ENCODE measurements at regions of chr18 and their contacts with region 1.

Region 1: DNA sequence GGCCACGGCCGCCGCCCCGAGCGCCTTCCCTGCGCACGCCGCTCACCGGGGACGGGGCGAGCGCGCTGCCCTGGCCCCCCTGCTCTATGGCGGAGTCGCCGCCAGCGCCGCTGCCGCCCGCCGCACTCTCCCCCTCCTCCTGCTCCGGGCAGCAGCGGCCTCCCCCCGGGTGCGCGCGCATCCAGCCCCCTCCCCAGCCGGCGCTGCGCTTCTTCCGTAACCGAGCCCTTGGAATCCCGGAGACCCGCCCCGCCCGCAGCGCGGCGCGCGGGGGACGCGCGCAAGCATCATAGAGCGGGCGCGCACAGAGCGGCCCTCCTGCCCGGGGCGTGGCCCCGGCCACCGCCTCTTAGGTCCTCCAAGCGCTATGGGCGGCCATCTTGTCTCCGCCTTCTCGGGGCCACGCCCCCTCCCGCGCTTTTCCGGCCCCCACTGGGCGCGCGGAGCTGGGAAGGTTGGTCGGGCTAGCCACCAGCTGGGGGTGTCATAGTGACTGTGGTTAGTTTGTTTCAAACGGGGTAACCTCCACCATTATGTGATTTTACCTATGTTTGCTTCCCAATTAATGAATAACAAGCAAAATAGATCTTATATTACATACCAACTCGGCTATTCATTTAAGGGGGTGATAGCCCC is at the start of gene MBD2:
- DNase-seq: peak; percentile 90 to 91
- H3K4me3 ChIP-seq: peak within 1 kb of the TSS; percentile 76 to 85 (median 81)
- H3K27ac ChIP-seq: peak within 1 kb of the TSS; percentile 84 to 96
- H3K4me1 ChIP-seq: peaks cover 0 to 4% of the 10 kb centered on the region in 2 donors
- H3K27me3 ChIP-seq: no peaks in the 10 kb centered on the region
- CTCF ChIP-seq: peak in 1 of 3 donors; percentile 12
- POLR2A ChIP-seq: peak; percentile 20
- total RNA-seq, gene MBD2: 46.2 to 61.9 (median 50.6) TPM

Region 2: DNA sequence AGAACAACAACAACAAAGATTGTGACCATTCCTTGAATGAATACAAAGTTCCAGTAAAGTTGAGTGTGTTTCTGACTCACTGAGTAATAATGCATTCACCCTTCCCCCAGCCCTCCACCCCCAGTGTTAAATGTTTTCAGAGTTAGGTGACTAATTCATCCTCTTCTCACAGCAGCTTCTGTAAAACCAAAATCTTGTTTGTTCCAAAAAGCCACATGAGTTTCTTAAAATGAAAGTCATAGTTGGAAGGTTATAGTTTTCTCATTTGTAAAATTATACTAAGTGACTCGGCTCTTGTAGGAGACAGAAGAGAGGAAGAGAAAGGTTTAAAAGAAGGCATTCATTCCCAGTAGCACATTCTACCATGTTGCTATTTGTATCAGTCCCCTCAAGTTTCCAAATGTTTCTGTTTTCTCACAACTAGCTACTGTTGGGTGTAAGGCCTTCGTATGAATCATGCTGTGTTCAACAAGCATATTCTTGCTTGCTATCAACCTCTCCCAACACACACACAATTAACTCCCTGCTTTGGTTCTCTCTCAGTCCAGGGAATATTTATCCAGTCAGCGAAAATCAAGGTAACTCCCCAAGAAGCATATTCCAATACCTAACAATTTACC is 75.3 kb before region 1 on chr18:
- intact Hi-C with region 1: no loop called
- DNase-seq: no peak
- H3K4me3 ChIP-seq: no peak overlapping the region
- H3K27ac ChIP-seq: peak overlapping the region in 1 of 2 donors; percentile 72
- H3K4me1 ChIP-seq: no peaks in the 10 kb centered on the region
- H3K27me3 ChIP-seq: no peaks in the 10 kb centered on the region
- CTCF ChIP-seq: no peak
- POLR2A ChIP-seq: no peak

Region 3: GRCh38 chr18:54261894-54262293 is 37.4 kb after region 1 on chr18:
- intact Hi-C with region 1: loop called (anchors 5 kb)
- DNase-seq: no peak
- H3K4me3 ChIP-seq: no peak overlapping the region
- H3K27ac ChIP-seq: no peak overlapping the region
- H3K4me1 ChIP-seq: no peaks in the 10 kb centered on the region
- H3K27me3 ChIP-seq: no peaks in the 10 kb centered on the region
- CTCF ChIP-seq: no peak
- POLR2A ChIP-seq: no peak